Panc1 (cell line): ENCODE measurements at regions of chr11 and their contacts with region 1.

Region 1: DNA sequence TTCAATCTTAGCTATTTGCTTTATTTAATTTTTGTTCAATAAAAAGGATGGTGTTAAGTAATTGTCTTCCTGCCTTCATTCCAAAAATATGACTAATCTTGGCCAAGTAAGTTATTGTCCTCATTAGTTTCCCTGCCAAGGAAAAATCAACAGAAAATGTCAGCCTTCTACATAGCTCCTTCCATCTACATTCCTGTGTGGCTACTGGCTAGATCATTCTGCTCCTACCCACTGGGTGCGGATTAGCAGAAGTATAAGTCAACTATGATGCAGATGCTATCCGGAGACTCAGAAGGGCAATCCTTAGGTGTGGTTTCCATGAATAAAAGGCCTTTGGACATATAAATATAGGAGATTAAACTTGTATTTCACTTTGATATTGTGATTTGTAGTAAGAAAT is 154.4 kb downstream of the SBF2 start:
- DNase-seq: no peak
- ATAC-seq: peak; percentile 71
- H3K4me3 ChIP-seq: no peak overlapping the region
- H3K27ac ChIP-seq: peak overlapping the region; percentile 0; the same call in 1 of the 2 replicates
- H3K4me1 ChIP-seq: peaks cover 8% of the 10 kb centered on the region
- H3K27me3 ChIP-seq: no peaks in the 10 kb centered on the region
- CTCF ChIP-seq: no peak

Region 2: DNA sequence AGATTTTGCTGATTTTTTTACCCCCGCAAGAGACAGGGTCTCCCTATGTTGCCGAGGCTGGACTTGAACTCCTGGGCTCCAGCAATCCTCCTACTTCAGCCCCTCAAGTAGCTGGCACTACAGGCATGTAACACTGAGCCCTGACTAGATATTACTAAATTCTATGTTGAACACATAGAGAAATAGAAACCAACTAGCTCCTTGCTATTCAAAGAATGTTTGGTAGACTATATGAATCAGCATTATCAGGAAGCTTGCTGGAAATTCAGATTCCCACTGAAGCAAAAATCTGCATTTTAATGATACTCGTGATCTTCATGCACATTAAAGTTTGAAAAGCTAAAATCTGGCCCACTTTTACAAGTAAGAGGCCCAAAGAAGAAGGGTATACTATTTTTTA is 837.2 kb before region 1 on chr11:
- CTCF ChIA-PET with region 1: no interaction called
- POLR2A ChIA-PET with region 1: no interaction called
- in situ Hi-C with region 1: no loop called
- intact Hi-C with region 1: no loop called
- DNase-seq: no peak
- ATAC-seq: no peak
- H3K4me3 ChIP-seq: no peak overlapping the region
- H3K27ac ChIP-seq: no peak overlapping the region
- H3K4me1 ChIP-seq: no peaks in the 10 kb centered on the region
- H3K27me3 ChIP-seq: no peaks in the 10 kb centered on the region
- CTCF ChIP-seq: no peak

Region 3: GRCh38 chr11:10096987-10097386 is 42.7 kb before region 1 on chr11:
- CTCF ChIA-PET with region 1: no interaction called
- POLR2A ChIA-PET with region 1: interaction called, 11 read pairs
- in situ Hi-C with region 1: no loop called
- intact Hi-C with region 1: no loop called
- DNase-seq: no peak
- ATAC-seq: no peak
- H3K4me3 ChIP-seq: no peak overlapping the region
- H3K27ac ChIP-seq: peak overlapping the region; percentile 73; the same call in 1 of the 2 replicates
- H3K4me1 ChIP-seq: peaks cover 18% of the 10 kb centered on the region
- H3K27me3 ChIP-seq: no peaks in the 10 kb centered on the region
- CTCF ChIP-seq: no peak

Region 4: GRCh38 chr11:10568486-10568941 is 428.9 kb after region 1 on chr11 and contains the start of gene LYVE1:
- CTCF ChIA-PET with region 1: no interaction called
- POLR2A ChIA-PET with region 1: no interaction called
- in situ Hi-C with region 1: no loop called
- intact Hi-C with region 1: no loop called
- DNase-seq: no peak
- ATAC-seq: no peak
- H3K4me3 ChIP-seq: no peak within 1 kb of the TSS
- H3K27ac ChIP-seq: no peak within 1 kb of the TSS
- H3K4me1 ChIP-seq: no peaks in the 10 kb centered on the region
- H3K27me3 ChIP-seq: peaks cover 18% of the 10 kb centered on the region
- CTCF ChIP-seq: no peak
- total RNA-seq, gene LYVE1: 0.31 TPM